ENCODE measurements at regions of chr7 and their contacts with region 1.

Region 1: GRCh38 chr7:100428967-100429636 is 529 bp upstream of the MEPCE start:
- DNase-seq: peak; percentile 100
- ATAC-seq: peak; percentile 70
- H3K4me3 Mint-ChIP-seq: peak overlapping the region; percentile 88
- H3K27ac Mint-ChIP-seq: peak overlapping the region; percentile 100
- H3K4me1 Mint-ChIP-seq: peaks cover 43% of the 10 kb centered on the region
- H3K27me3 Mint-ChIP-seq: no peaks in the 10 kb centered on the region

Region 2: DNA sequence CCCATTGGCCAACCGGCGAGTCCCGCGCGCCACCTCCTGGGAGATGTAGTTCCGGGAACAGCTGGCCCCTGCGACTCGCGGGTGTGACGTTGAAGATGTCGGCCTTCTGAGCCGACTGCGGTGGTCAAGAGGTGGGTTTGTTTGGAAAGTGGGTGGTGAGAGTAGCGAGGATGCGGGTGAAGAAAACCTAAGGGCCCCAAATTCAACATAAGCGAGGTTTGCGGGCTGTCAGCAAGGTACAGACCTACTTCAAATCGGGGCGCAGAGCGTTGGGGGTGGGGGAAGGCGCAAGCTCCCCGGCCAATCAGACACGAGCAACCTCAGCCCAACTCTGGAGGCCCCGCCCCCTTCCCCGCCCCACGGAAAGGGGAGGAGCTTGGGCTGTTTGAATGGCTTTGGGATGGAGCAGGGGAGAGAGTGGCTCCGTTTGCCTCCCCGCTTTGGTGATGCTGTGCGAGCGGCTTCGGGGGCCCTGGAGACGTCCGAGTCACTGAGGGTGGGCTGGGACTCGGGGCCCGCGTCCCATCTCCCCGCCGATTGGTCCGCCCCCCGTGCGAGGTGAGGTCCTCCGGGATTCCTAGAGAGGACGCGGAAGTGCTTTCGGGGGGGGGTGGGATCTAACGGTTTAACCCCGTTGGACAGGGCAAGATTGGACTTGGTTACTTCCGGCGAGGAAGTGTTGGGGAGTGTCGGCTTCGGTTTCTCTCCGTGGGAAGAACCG is 924.3 kb before region 1 on chr7 and contains the start of gene ZKSCAN5:
- CTCF ChIA-PET with region 1: no interaction called
- POLR2A ChIA-PET with region 1: interaction called, 3 read pairs
- intact Hi-C with region 1: loop called in 1 of 2 experiments (anchors 1 kb)
- DNase-seq: peak; percentile 99
- ATAC-seq: peak; percentile 87
- H3K4me3 Mint-ChIP-seq: peak within 1 kb of the TSS; percentile 87
- H3K27ac Mint-ChIP-seq: peak within 1 kb of the TSS; percentile 97
- H3K4me1 Mint-ChIP-seq: peaks cover 25% of the 10 kb centered on the region
- H3K27me3 Mint-ChIP-seq: no peaks in the 10 kb centered on the region
- total RNA-seq, gene ZKSCAN5: 10.1 to 12.1 TPM

Region 3: GRCh38 chr7:100088621-100089457 is 340.3 kb before region 1 on chr7 and contains the start of gene COPS6:
- CTCF ChIA-PET with region 1: no interaction called
- POLR2A ChIA-PET with region 1: interaction called, 4 read pairs
- intact Hi-C with region 1: loop called in 1 of 2 experiments (anchors 2 kb)
- DNase-seq: peak; percentile 92
- ATAC-seq: peak; percentile 67
- H3K4me3 Mint-ChIP-seq: peak within 1 kb of the TSS; percentile 89
- H3K27ac Mint-ChIP-seq: peak within 1 kb of the TSS; percentile 96
- H3K4me1 Mint-ChIP-seq: peaks cover 25% of the 10 kb centered on the region
- H3K27me3 Mint-ChIP-seq: no peaks in the 10 kb centered on the region
- total RNA-seq, gene COPS6: 88.6 to 89.0 TPM

Region 4: GRCh38 chr7:100148559-100149350 is 280.3 kb before region 1 on chr7 and contains the start of gene LAMTOR4:
- CTCF ChIA-PET with region 1: no interaction called
- POLR2A ChIA-PET with region 1: interaction called, 7 read pairs
- intact Hi-C with region 1: loop called in 1 of 2 experiments (anchors 1 kb)
- DNase-seq: peak; percentile 99
- ATAC-seq: peak; percentile 98
- H3K4me3 Mint-ChIP-seq: peak within 1 kb of the TSS; percentile 94
- H3K27ac Mint-ChIP-seq: peak within 1 kb of the TSS; percentile 97
- H3K4me1 Mint-ChIP-seq: peaks cover 29% of the 10 kb centered on the region
- H3K27me3 Mint-ChIP-seq: no peaks in the 10 kb centered on the region
- total RNA-seq, gene LAMTOR4: 69.6 to 120 TPM

Region 5: GRCh38 chr7:100396421-100396982 is 32.6 kb before region 1 on chr7:
- CTCF ChIA-PET with region 1: no interaction called
- POLR2A ChIA-PET with region 1: interaction called, 7 read pairs
- intact Hi-C with region 1: loop called in 1 of 2 experiments (anchors 1 kb)
- DNase-seq: peak; percentile 82
- ATAC-seq: peak; percentile 92
- H3K4me3 Mint-ChIP-seq: peak overlapping the region; percentile 1
- H3K27ac Mint-ChIP-seq: peak overlapping the region; percentile 40
- H3K4me1 Mint-ChIP-seq: peaks cover 26% of the 10 kb centered on the region
- H3K27me3 Mint-ChIP-seq: peaks cover 20% of the 10 kb centered on the region

Region 6: DNA sequence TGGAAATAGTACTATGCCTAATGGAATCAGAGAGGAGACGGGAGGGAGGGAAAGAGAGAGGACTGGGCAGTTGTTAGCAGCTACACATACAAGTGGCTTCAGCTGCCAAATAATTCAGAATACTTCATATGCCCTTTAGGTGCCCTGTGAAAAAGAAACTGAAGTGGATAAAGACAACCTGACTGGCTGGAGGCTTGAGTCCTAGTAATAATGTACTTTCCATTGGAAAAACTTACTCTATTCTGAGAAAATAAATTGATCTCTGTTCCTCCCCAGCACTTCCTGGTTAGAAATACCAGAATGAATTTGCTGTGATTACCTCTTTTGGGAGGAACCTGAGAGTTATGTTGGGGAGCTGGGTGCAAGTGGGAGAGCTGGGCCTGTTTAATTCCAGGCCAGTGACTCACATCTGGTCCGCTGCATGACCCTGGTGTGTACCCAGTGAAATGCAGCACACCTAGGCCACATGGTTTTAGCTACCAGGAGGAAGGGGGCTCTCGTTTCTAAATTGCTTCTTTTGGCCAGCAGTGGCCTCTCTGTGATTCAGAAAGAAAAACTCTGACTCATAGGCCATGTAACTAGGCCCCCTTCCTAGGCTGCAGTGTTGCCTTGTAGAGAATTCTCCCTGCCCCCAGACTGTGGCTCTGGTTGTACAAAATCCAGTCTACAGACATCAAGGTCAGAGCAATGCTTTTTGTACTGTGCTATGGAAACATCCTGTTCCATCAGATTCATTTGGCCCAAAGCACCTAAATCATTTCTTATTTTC is 116.4 kb after region 1 on chr7:
- CTCF ChIA-PET with region 1: no interaction called
- POLR2A ChIA-PET with region 1: interaction called, 7 read pairs
- intact Hi-C with region 1: loop called in 1 of 2 experiments (anchors 1 kb)
- DNase-seq: peak; percentile 82
- ATAC-seq: peak; percentile 78
- H3K4me3 Mint-ChIP-seq: peak overlapping the region; percentile 98
- H3K27ac Mint-ChIP-seq: peak overlapping the region; percentile 99
- H3K4me1 Mint-ChIP-seq: peaks cover 96% of the 10 kb centered on the region
- H3K27me3 Mint-ChIP-seq: no peaks in the 10 kb centered on the region

Region 7: GRCh38 chr7:100705753-100706671 is 276.9 kb after region 1 on chr7 and contains the start of gene POP7:
- CTCF ChIA-PET with region 1: no interaction called
- POLR2A ChIA-PET with region 1: interaction called, 22 read pairs
- intact Hi-C with region 1: loop called in 1 of 2 experiments (anchors 1 kb)
- DNase-seq: peak; percentile 99
- ATAC-seq: peak; percentile 96
- H3K4me3 Mint-ChIP-seq: peak within 1 kb of the TSS; percentile 96
- H3K27ac Mint-ChIP-seq: peak within 1 kb of the TSS; percentile 96
- H3K4me1 Mint-ChIP-seq: peaks cover 12% of the 10 kb centered on the region
- H3K27me3 Mint-ChIP-seq: no peaks in the 10 kb centered on the region
- total RNA-seq, gene POP7: 46.1 to 59.4 TPM

Measured in activated CD4-positive, alpha-beta T cell treated with anti-CD3 and anti-CD28 coated beads for 36 hours (primary cell).